Posterior vena cava (tissue), 2 donors: ENCODE measurements at regions of chr4 and their contacts with region 1.

Region 1: GRCh38 chr4:165537028-165537648 is 158.3 kb downstream of the CPE start:
- DNase-seq: no peak

Region 2: GRCh38 chr4:165514739-165515138 is 22.4 kb before region 1 on chr4:
- intact Hi-C with region 1: loop called in 1 of 2 experiments (anchors 1 kb)
- DNase-seq: no peak

Region 3: DNA sequence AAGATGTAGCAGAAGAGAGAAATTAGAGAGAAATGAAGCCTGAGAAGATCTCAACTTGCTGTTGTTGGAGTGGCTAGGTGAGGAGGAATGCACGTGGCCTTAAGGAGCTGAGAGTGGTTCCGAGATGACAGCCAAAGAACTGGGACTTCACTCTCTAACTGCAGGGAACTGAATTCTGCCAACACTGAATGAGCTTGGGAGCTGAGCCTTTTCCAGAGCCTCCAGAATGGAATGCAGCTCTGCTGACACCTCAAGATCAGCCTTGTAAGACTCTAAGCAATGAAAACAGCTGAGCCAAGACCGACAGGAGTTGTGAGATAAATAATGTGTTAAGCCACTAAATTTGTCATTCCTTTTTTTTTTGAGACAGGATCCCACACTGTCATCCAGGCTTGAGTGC is 408.9 kb after region 1 on chr4:
- intact Hi-C with region 1: no loop called
- DNase-seq: no peak

Region 4: DNA sequence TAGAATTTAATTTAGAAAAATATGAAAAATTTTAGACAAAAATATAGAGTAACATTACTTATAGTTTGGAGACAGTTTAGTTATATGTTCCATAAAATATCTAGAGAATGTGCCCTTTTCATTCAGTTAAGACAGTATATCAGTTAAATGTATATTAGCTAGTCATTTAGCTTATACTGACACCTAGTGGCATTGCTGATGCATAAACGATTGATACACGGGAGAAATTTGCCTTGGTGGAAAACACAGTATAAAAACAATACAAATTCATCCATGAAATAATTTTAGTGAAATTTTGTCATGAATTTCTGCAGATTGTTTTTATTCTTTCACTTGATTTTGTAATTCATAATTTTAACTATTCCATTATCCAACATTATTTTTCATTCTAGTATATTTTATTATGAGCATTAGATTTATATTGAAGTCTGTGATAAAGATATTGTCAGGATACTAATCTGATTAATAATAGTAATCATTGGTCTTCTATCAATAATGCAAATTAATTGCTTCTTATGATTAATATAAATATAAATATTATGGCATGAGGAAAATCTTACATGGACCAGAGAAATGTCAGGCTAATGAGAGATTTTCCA is 554.9 kb after region 1 on chr4:
- intact Hi-C with region 1: loop called (anchors 5 to 10 kb)
- DNase-seq: no peak